GM12878 (cell line): ENCODE measurements at regions of chr2 and their contacts with region 1.

Region 1: GRCh38 chr2:231604685-231605606 is 12.3 kb downstream of the TEX44 start:
- DNase-seq: peak; percentile 83
- ATAC-seq: peak; percentile 84
- H3K4me3 ChIP-seq: peak overlapping the region; percentile 28; the same call in 1 of the 2 replicates
- H3K27ac ChIP-seq: peak overlapping the region; percentile 58
- H3K4me1 ChIP-seq: peaks cover 17% of the 10 kb centered on the region
- H3K27me3 ChIP-seq: no peaks in the 10 kb centered on the region
- CTCF ChIP-seq: peak in 1 of 3 experiments; percentile 27; a peak in 1 of 6 replicates
- EP300 ChIP-seq: peak; percentile 41 to 91; a peak in 3 of 4 replicates
- POLR2A ChIP-seq: no peak; the same call in 1 of the 2 replicates
- RAD21 ChIP-seq: no peak

Region 2: GRCh38 chr2:231482806-231483391 is 122.0 kb before region 1 on chr2:
- CTCF ChIA-PET with region 1: interaction called, 13 read pairs
- POLR2A ChIA-PET with region 1: no interaction called
- RAD21 ChIA-PET with region 1: no interaction called
- SMC1A ChIA-PET with region 1: interaction called, 4 read pairs
- in situ Hi-C with region 1: no loop called
- intact Hi-C with region 1: no loop called
- DNase-seq: no peak
- ATAC-seq: peak; percentile 90
- H3K4me3 ChIP-seq: peak overlapping the region; percentile 79
- H3K27ac ChIP-seq: peak overlapping the region; percentile 93
- H3K4me1 ChIP-seq: peaks cover 15% of the 10 kb centered on the region
- H3K27me3 ChIP-seq: no peaks in the 10 kb centered on the region
- CTCF ChIP-seq: peak; percentile 85 to 95 (median 91)
- EP300 ChIP-seq: no peak
- POLR2A ChIP-seq: peak; percentile 80
- RAD21 ChIP-seq: peak; percentile 48; the same call in 1 of the 2 replicates

Region 3: GRCh38 chr2:231514103-231514950 is 90.6 kb before region 1 on chr2:
- CTCF ChIA-PET with region 1: interaction called, 64 read pairs
- POLR2A ChIA-PET with region 1: interaction called, 3 read pairs
- RAD21 ChIA-PET with region 1: interaction called, 16 read pairs
- SMC1A ChIA-PET with region 1: interaction called, 12 read pairs
- in situ Hi-C with region 1: no loop called
- intact Hi-C with region 1: loop called (anchors 1 kb)
- DNase-seq: peak; percentile 81
- ATAC-seq: peak; percentile 100
- H3K4me3 ChIP-seq: peak overlapping the region; percentile 91
- H3K27ac ChIP-seq: peak overlapping the region; percentile 82
- H3K4me1 ChIP-seq: peaks cover 9% of the 10 kb centered on the region
- H3K27me3 ChIP-seq: no peaks in the 10 kb centered on the region
- CTCF ChIP-seq: no peak
- EP300 ChIP-seq: no peak
- POLR2A ChIP-seq: peak; percentile 97
- RAD21 ChIP-seq: no peak

Region 4: DNA sequence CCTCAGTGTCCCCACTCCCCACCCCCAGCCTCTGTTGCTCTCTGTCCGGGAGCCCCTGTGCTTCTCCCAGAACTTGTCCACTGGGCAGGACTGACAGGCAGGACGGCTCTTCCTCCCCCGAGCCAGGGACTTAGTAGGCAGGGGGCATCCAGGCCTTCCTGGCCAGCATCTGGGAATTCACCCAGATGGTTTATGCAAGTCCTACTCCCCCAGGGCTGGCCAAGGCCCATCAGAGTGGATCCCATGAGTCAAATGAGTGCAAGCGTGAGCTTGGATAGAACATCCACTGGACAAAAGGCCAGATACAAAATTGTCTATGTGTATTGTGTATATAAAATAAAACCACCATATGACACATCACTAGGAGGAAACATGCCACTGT is 82.2 kb before region 1 on chr2:
- CTCF ChIA-PET with region 1: interaction called, 64 read pairs
- POLR2A ChIA-PET with region 1: interaction called, 3 read pairs
- RAD21 ChIA-PET with region 1: interaction called, 16 read pairs
- SMC1A ChIA-PET with region 1: interaction called, 12 read pairs
- in situ Hi-C with region 1: no loop called
- intact Hi-C with region 1: loop called (anchors 1 kb)
- DNase-seq: no peak
- ATAC-seq: no peak
- H3K4me3 ChIP-seq: no peak overlapping the region
- H3K27ac ChIP-seq: no peak overlapping the region
- H3K4me1 ChIP-seq: peaks cover 5% of the 10 kb centered on the region
- H3K27me3 ChIP-seq: no peaks in the 10 kb centered on the region
- CTCF ChIP-seq: no peak
- EP300 ChIP-seq: no peak
- POLR2A ChIP-seq: no peak
- RAD21 ChIP-seq: no peak

Region 5: GRCh38 chr2:231563378-231563961 is 41.5 kb before region 1 on chr2:
- CTCF ChIA-PET with region 1: interaction called, 218 read pairs
- POLR2A ChIA-PET with region 1: interaction called, 3 read pairs
- RAD21 ChIA-PET with region 1: interaction called, 118 read pairs
- SMC1A ChIA-PET with region 1: interaction called, 112 read pairs
- in situ Hi-C with region 1: no loop called
- intact Hi-C with region 1: loop called (anchors 1 kb)
- DNase-seq: no peak
- ATAC-seq: peak; percentile 99
- H3K4me3 ChIP-seq: no peak overlapping the region
- H3K27ac ChIP-seq: no peak overlapping the region
- H3K4me1 ChIP-seq: no peaks in the 10 kb centered on the region; the same call in 1 of the 2 replicates
- H3K27me3 ChIP-seq: no peaks in the 10 kb centered on the region
- CTCF ChIP-seq: peak; percentile 59 to 89 (median 85); a peak in 5 of 6 replicates
- EP300 ChIP-seq: no peak
- POLR2A ChIP-seq: no peak
- RAD21 ChIP-seq: peak; percentile 83

Region 6: DNA sequence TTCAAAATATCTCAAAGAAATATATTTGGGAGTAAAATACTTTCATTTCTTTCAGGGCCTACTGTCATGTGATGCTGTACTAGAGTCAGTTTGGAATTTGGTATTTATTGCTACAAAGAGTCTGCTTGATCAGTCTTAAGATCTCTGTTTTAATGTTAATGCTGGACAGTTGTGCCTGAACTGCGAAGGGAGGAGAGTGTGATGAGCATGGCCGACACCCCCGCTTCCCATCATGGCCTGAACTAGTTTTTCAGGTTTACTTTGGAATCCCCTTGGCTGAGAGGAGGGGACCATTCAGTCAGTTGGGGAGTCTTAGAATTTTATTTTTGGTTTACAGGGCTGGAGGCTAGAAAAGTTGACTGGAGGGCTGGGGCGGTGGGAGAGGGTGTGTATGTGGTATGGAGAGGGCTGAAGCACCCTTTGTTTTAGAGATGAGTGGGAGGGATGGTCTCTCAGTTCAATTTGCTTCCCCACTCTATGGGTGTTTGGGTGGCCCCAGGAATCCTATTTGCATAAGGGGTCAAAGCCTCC is 33.2 kb before region 1 on chr2:
- CTCF ChIA-PET with region 1: interaction called, 218 read pairs
- POLR2A ChIA-PET with region 1: interaction called, 3 read pairs
- RAD21 ChIA-PET with region 1: interaction called, 118 read pairs
- SMC1A ChIA-PET with region 1: interaction called, 112 read pairs
- in situ Hi-C with region 1: no loop called
- intact Hi-C with region 1: no loop called
- DNase-seq: no peak
- ATAC-seq: no peak
- H3K4me3 ChIP-seq: no peak overlapping the region
- H3K27ac ChIP-seq: no peak overlapping the region
- H3K4me1 ChIP-seq: no peaks in the 10 kb centered on the region; the same call in 1 of the 2 replicates
- H3K27me3 ChIP-seq: no peaks in the 10 kb centered on the region
- CTCF ChIP-seq: no peak
- EP300 ChIP-seq: no peak
- POLR2A ChIP-seq: no peak
- RAD21 ChIP-seq: no peak

Region 7: GRCh38 chr2:231590619-231591018 is 14.3 kb before region 1 on chr2:
- CTCF ChIA-PET with region 1: interaction called, 29 read pairs
- POLR2A ChIA-PET with region 1: no interaction called
- RAD21 ChIA-PET with region 1: interaction called, 3 read pairs
- SMC1A ChIA-PET with region 1: interaction called, 4 read pairs
- in situ Hi-C with region 1: no loop called
- intact Hi-C with region 1: no loop called
- DNase-seq: no peak
- ATAC-seq: no peak
- H3K4me3 ChIP-seq: no peak overlapping the region
- H3K27ac ChIP-seq: no peak overlapping the region
- H3K4me1 ChIP-seq: peaks cover 9% of the 10 kb centered on the region
- H3K27me3 ChIP-seq: no peaks in the 10 kb centered on the region
- CTCF ChIP-seq: no peak
- EP300 ChIP-seq: no peak
- POLR2A ChIP-seq: no peak
- RAD21 ChIP-seq: no peak

Region 8: GRCh38 chr2:231634951-231635875 is 30.3 kb after region 1 on chr2:
- CTCF ChIA-PET with region 1: no interaction called
- POLR2A ChIA-PET with region 1: no interaction called
- RAD21 ChIA-PET with region 1: no interaction called
- SMC1A ChIA-PET with region 1: no interaction called
- in situ Hi-C with region 1: no loop called
- intact Hi-C with region 1: no loop called
- DNase-seq: no peak
- ATAC-seq: no peak
- H3K4me3 ChIP-seq: no peak overlapping the region
- H3K27ac ChIP-seq: no peak overlapping the region
- H3K4me1 ChIP-seq: no peaks in the 10 kb centered on the region
- H3K27me3 ChIP-seq: no peaks in the 10 kb centered on the region
- CTCF ChIP-seq: no peak
- EP300 ChIP-seq: no peak
- POLR2A ChIP-seq: no peak
- RAD21 ChIP-seq: no peak

Region 9: GRCh38 chr2:231686192-231687100 is 81.5 kb after region 1 on chr2:
- CTCF ChIA-PET with region 1: no interaction called
- POLR2A ChIA-PET with region 1: no interaction called
- RAD21 ChIA-PET with region 1: no interaction called
- SMC1A ChIA-PET with region 1: no interaction called
- in situ Hi-C with region 1: no loop called
- intact Hi-C with region 1: no loop called
- DNase-seq: no peak
- ATAC-seq: no peak
- H3K4me3 ChIP-seq: no peak overlapping the region
- H3K27ac ChIP-seq: no peak overlapping the region
- H3K4me1 ChIP-seq: peaks cover 7% of the 10 kb centered on the region
- H3K27me3 ChIP-seq: no peaks in the 10 kb centered on the region
- CTCF ChIP-seq: no peak
- EP300 ChIP-seq: no peak
- POLR2A ChIP-seq: no peak
- RAD21 ChIP-seq: no peak